ENCODE measurements at regions of chr10 and their contacts with region 1.

Region 1: GRCh38 chr10:68720793-68721672 is at the start of gene CCAR1:
- DNase-seq: peak; percentile 99
- ATAC-seq: peak; percentile 99
- H3K4me3 ChIP-seq: peak within 1 kb of the TSS; percentile 67
- H3K27ac ChIP-seq: peak within 1 kb of the TSS; percentile 79
- H3K4me1 ChIP-seq: no peaks in the 10 kb centered on the region
- H3K27me3 ChIP-seq: no peaks in the 10 kb centered on the region
- CTCF ChIP-seq: no peak
- POLR2A ChIP-seq: peak; percentile 77
- RAD21 ChIP-seq: no peak
- total RNA-seq, gene CCAR1: 46.1 and 60.8 TPM in 2 replicates

Region 2: DNA sequence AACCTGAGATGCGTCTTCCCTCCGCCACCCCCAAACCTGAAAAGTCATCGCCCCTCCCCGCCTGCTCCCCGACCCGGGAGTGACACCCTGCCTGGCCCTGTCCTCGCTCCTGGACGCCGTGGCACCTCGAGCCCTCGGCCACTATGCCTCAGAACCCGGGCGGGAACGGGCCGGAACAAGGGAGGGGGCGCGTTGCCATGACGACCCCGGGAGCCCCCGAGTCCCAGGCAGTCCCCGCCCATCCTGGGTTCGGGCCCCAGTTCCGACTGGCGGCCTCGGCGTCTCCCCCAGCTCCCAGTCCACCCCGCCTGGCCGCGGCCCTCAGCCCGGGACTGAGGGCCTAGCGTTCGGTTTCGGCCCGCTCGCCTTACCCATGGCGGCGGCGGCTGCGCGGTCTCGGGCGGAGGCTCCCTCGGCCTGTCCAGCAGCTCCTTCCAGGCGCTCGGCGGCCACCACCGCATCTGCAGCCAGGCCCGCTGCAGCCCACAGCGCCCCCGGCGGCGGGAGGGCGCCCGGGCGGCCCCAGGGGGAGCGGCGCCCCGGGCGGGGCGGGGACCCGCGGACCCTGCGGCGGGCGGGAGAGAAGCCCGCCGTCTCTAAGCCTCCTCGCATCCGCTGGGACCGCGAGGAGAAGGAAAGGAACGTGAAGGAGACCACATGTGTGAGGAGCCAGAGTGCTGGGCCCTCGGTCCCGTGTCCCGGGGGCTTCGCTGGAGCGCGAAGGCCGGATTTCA is 314.1 kb before region 1 on chr10 and contains the start of gene RUFY2:
- CTCF ChIA-PET with region 1: no interaction called
- POLR2A ChIA-PET with region 1: no interaction called
- dilution Hi-C with region 1: no loop called
- in situ Hi-C with region 1: no loop called
- intact Hi-C with region 1: loop called (anchors 5 kb)
- DNase-seq: peak; percentile 70
- ATAC-seq: peak; percentile 97
- H3K4me3 ChIP-seq: peak within 1 kb of the TSS; percentile 97
- H3K27ac ChIP-seq: peak within 1 kb of the TSS; percentile 96
- H3K4me1 ChIP-seq: no peaks in the 10 kb centered on the region; the same call in 1 of the 2 replicates
- H3K27me3 ChIP-seq: no peaks in the 10 kb centered on the region
- CTCF ChIP-seq: peak; percentile 74
- POLR2A ChIP-seq: no peak; the same call in 1 of the 2 replicates
- RAD21 ChIP-seq: peak; percentile 6; the same call in 1 of the 2 replicates
- total RNA-seq, gene RUFY2: 6.8 and 16.4 TPM in 2 replicates

Region 3: GRCh38 chr10:68550747-68551411 is 170.2 kb before region 1 on chr10:
- CTCF ChIA-PET with region 1: interaction called, 4 read pairs
- POLR2A ChIA-PET with region 1: no interaction called
- dilution Hi-C with region 1: no loop called
- in situ Hi-C with region 1: no loop called
- intact Hi-C with region 1: loop called (anchors 2 kb)
- DNase-seq: peak; percentile 82
- ATAC-seq: peak; percentile 96
- H3K4me3 ChIP-seq: no peak overlapping the region
- H3K27ac ChIP-seq: no peak overlapping the region
- H3K4me1 ChIP-seq: peaks cover 8% of the 10 kb centered on the region
- H3K27me3 ChIP-seq: no peaks in the 10 kb centered on the region
- CTCF ChIP-seq: peak; percentile 73
- POLR2A ChIP-seq: no peak
- RAD21 ChIP-seq: peak; percentile 74

Region 4: DNA sequence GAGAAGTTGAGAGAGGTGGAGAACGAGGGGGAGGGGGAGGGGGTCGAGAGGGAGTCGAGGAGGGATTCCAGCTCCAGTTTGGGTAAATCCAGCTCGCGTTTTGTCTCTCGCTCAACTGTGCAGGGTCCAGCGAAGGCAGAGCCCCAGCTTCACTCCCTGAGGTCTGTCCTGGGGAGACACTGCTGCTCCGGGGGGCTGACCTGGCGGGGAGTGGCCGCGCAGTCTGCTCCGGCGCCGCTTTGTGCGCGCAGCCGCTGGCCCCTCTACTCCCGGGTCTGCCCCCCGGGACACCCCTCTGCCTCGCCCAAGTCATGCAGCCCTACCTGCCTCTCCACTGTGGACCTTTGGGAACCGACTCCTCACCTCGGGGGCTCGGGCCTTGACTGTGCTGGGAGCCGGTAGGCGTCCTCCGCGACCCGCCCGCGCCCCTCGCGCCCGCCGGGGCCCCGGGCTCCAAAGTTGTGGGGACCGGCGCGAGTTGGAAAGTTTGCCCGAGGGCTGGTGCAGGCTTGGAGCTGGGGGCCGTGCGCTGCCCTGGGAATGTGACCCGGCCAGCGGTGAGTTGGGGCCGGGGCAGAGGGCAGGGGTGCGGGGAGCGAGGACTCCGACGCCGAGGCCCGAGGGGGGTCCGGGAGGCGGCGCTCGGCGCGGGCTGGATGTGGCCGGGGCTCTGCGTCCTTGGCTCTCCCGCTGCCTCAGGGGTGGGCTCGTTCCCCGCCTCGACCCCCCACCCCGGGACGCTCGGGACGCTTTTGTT is 160.7 kb before region 1 on chr10 and contains the start of gene TET1:
- CTCF ChIA-PET with region 1: no interaction called
- POLR2A ChIA-PET with region 1: no interaction called
- dilution Hi-C with region 1: no loop called
- in situ Hi-C with region 1: no loop called
- intact Hi-C with region 1: loop called (anchors 2 kb)
- DNase-seq: peak; percentile 59
- ATAC-seq: peak; percentile 67
- H3K4me3 ChIP-seq: peak within 1 kb of the TSS; percentile 96
- H3K27ac ChIP-seq: peak within 1 kb of the TSS; percentile 82
- H3K4me1 ChIP-seq: peaks cover 1% of the 10 kb centered on the region; the same call in 1 of the 2 replicates
- H3K27me3 ChIP-seq: no peaks in the 10 kb centered on the region
- CTCF ChIP-seq: no peak
- POLR2A ChIP-seq: peak; percentile 29; the same call in 1 of the 2 replicates
- RAD21 ChIP-seq: no peak
- total RNA-seq, gene TET1: 4.3 and 5.6 TPM in 2 replicates

Region 5: DNA sequence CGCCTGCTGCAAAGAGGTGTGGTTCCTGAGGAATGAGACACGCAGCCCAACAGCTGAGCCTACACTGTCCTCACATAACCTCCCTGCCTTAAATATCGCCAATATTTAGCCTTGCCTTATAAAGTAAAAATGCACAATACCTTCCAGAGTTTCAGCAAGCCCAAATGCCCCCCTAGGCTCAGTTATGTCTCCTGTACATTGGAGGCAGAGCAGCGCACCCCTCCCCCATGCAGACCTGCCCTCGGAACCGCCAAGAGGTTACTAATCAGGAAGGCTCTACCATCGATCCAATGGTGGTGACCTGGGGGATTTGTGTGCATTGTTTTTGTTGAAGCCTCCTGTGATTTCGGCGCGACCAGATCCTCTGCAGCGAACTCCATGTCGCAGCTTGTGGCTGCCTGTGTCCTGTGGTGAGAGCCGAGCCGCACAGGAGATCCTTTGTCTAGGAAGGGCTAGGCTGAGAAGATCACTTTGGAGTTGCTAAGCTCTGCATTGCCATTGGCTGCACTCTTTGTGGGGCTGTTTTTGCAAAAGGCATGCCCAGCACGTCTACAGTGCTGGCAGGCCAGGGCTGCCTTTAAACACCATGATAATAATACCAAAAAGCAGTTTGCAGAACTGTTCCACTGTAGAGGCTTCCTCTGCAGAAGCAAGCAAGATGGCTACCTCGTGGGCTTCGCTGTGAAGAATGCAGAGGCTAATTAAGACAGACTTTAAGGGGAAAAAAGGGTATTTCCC is 120.8 kb before region 1 on chr10:
- CTCF ChIA-PET with region 1: no interaction called
- POLR2A ChIA-PET with region 1: no interaction called
- dilution Hi-C with region 1: no loop called
- in situ Hi-C with region 1: no loop called
- intact Hi-C with region 1: loop called (anchors 2 kb)
- DNase-seq: peak; percentile 87
- ATAC-seq: peak; percentile 92
- H3K4me3 ChIP-seq: peak overlapping the region; percentile 42
- H3K27ac ChIP-seq: peak overlapping the region; percentile 92
- H3K4me1 ChIP-seq: peaks cover 12% of the 10 kb centered on the region
- H3K27me3 ChIP-seq: no peaks in the 10 kb centered on the region
- CTCF ChIP-seq: no peak
- POLR2A ChIP-seq: no peak
- RAD21 ChIP-seq: peak; percentile 11; the same call in 1 of the 2 replicates

Region 6: DNA sequence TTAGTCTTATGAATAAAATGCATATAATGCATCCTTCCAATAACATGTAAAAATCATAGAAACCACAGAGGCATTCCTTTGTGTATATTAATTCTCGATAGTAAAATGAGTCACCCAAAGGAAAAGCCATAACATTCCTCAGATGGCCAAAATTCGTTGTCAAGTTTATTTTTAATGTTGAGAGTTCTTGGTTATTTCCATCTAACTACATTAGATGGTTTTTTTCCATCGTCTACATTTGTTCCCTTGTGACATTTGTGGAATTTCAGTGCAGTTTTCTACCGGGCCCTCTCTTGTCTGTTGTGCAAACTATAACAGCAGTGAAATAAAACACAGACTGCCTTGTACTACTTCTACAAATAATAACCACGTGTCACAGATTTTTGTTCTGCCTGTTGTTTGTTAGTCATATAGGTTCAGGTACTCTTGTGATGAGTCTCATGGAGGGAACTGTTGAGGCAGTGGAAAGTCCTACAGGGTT is 54.7 kb before region 1 on chr10:
- CTCF ChIA-PET with region 1: no interaction called
- POLR2A ChIA-PET with region 1: no interaction called
- dilution Hi-C with region 1: no loop called
- in situ Hi-C with region 1: no loop called
- intact Hi-C with region 1: loop called (anchors 5 kb)
- DNase-seq: peak; percentile 95
- ATAC-seq: peak; percentile 91
- H3K4me3 ChIP-seq: no peak overlapping the region
- H3K27ac ChIP-seq: peak overlapping the region; percentile 91
- H3K4me1 ChIP-seq: peaks cover 5% of the 10 kb centered on the region
- H3K27me3 ChIP-seq: no peaks in the 10 kb centered on the region
- CTCF ChIP-seq: no peak
- POLR2A ChIP-seq: no peak
- RAD21 ChIP-seq: no peak

Region 7: GRCh38 chr10:68697106-68697505 is 23.9 kb before region 1 on chr10:
- CTCF ChIA-PET with region 1: no interaction called
- POLR2A ChIA-PET with region 1: no interaction called
- dilution Hi-C with region 1: no loop called
- in situ Hi-C with region 1: no loop called
- intact Hi-C with region 1: no loop called
- DNase-seq: no peak
- ATAC-seq: no peak
- H3K4me3 ChIP-seq: no peak overlapping the region
- H3K27ac ChIP-seq: no peak overlapping the region
- H3K4me1 ChIP-seq: no peaks in the 10 kb centered on the region
- H3K27me3 ChIP-seq: no peaks in the 10 kb centered on the region
- CTCF ChIP-seq: no peak
- POLR2A ChIP-seq: no peak
- RAD21 ChIP-seq: no peak

Region 8: GRCh38 chr10:69004821-69005220 is 283.8 kb after region 1 on chr10:
- CTCF ChIA-PET with region 1: no interaction called
- POLR2A ChIA-PET with region 1: no interaction called
- dilution Hi-C with region 1: no loop called
- in situ Hi-C with region 1: no loop called
- intact Hi-C with region 1: no loop called
- DNase-seq: peak; percentile 73
- ATAC-seq: peak; percentile 81
- H3K4me3 ChIP-seq: no peak overlapping the region
- H3K27ac ChIP-seq: no peak overlapping the region
- H3K4me1 ChIP-seq: 0 out of 2 replicates have a peak, but pooled peaks cover 2% of the 10 kb centered on the region
- H3K27me3 ChIP-seq: no peaks in the 10 kb centered on the region
- CTCF ChIP-seq: peak; percentile 81
- POLR2A ChIP-seq: no peak
- RAD21 ChIP-seq: peak; percentile 80

Measured in IMR-90 (cell line).